ENCODE measurements at regions of chr4 and their contacts with region 1.

Region 1: GRCh38 chr4:42519803-42520417 is 122.6 kb downstream of the SHISA3 start:
- DNase-seq: peak; percentile 81
- ATAC-seq: peak; percentile 64
- H3K4me3 ChIP-seq: no peak overlapping the region
- H3K27ac ChIP-seq: no peak overlapping the region
- H3K4me1 ChIP-seq: no peaks in the 10 kb centered on the region
- H3K27me3 ChIP-seq: no peaks in the 10 kb centered on the region
- CTCF ChIP-seq: peak; percentile 76

Region 2: GRCh38 chr4:41963105-41963504 is 556.8 kb before region 1 on chr4:
- CTCF ChIA-PET with region 1: no interaction called
- POLR2A ChIA-PET with region 1: no interaction called
- intact Hi-C with region 1: loop called (anchors 10 kb)
- DNase-seq: peak; percentile 47
- ATAC-seq: no peak
- H3K4me3 ChIP-seq: no peak overlapping the region
- H3K27ac ChIP-seq: no peak overlapping the region
- H3K4me1 ChIP-seq: peaks cover 15% of the 10 kb centered on the region
- H3K27me3 ChIP-seq: no peaks in the 10 kb centered on the region
- CTCF ChIP-seq: peak; percentile 59

Region 3: DNA sequence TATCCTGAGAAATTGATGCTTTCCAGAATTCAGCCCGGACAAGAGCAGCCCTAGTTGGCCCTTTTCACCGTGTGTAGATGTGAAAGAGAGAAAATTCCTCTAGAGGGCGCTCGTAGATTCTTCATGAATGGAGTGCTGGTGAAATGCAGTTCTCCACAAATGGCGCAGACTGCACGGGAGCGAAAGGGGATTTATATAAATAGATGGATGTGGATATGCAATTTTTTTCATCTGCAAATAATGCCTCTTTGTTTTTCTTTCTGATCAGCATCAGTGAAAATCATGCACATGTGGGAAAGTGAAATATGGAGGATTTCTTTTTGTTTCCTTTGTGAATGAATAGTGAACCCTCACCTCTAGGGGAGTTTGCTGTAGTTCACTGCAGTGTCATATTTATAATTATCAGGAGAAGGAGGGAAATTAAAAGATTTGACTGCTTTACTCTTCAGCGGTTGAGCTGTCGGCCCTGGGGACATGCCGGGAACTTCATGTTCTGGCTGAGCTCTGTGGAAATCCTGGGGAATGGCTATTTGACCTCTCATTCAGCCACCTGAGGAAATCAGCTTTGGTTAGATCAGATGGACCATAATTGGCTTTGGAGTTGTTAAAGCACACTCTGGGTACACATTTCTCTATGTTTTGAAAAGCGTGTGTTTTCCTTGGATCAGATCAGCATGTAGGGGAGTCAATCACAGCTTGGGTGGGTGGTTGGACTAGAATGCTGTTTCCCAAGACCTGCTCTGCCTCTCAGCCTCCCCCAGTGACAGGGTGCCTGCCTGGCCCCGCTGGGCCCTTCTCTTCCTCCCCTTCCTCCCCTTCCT is 237.6 kb before region 1 on chr4:
- CTCF ChIA-PET with region 1: no interaction called
- POLR2A ChIA-PET with region 1: no interaction called
- intact Hi-C with region 1: loop called (anchors 1 kb)
- DNase-seq: peak; percentile 89
- ATAC-seq: peak; percentile 85
- H3K4me3 ChIP-seq: peak overlapping the region; percentile 14; the same call in 1 of the 2 replicates
- H3K27ac ChIP-seq: no peak overlapping the region
- H3K4me1 ChIP-seq: peaks cover 20% of the 10 kb centered on the region
- H3K27me3 ChIP-seq: no peaks in the 10 kb centered on the region
- CTCF ChIP-seq: peak; percentile 84

Region 4: DNA sequence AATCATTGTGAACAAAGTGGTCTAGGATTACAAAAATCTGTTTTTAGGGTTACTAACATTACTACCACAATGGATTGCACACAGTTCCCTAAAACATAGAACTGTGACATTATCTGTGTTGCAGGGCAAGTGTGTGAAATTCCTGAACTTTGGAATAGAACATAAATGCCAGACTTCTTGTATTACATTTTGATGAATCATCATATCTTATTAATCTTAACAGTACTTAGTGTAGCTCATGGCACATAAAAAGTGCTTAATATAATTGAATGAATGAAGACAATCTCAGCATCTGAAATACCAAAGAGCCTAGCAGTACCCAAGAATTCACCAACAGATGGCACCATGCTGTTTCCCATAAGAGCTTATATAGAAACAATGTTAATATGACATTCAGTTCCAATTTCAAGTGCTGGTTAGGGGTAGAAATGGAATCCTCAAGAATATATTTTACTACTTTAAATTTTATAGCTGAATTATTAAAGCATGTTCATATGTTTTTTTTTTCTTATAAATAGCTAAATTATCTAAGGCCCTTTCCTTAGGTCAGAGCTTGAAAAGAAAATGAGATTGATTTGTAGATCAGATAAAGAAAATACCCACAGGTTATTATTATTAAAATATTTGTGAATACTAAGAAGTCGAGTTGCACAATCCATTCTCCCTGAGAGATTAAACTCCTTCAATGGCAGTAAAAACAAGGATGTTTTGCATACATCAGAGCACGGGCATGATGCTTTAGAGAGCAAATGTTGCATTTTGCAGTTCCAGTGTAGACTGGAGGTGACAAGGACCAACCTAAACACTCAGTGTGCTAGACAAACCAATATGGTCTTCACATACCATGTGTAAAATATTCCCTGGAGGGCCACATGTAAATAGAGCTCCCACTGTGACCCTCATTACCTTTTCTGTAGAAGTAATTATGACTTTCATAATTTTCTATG is 148.3 kb before region 1 on chr4:
- CTCF ChIA-PET with region 1: interaction called, 18 read pairs
- POLR2A ChIA-PET with region 1: no interaction called
- intact Hi-C with region 1: loop called (anchors 1 kb)
- DNase-seq: peak; percentile 77
- ATAC-seq: peak; percentile 80
- H3K4me3 ChIP-seq: no peak overlapping the region
- H3K27ac ChIP-seq: no peak overlapping the region
- H3K4me1 ChIP-seq: no peaks in the 10 kb centered on the region
- H3K27me3 ChIP-seq: no peaks in the 10 kb centered on the region
- CTCF ChIP-seq: peak; percentile 68

Region 5: DNA sequence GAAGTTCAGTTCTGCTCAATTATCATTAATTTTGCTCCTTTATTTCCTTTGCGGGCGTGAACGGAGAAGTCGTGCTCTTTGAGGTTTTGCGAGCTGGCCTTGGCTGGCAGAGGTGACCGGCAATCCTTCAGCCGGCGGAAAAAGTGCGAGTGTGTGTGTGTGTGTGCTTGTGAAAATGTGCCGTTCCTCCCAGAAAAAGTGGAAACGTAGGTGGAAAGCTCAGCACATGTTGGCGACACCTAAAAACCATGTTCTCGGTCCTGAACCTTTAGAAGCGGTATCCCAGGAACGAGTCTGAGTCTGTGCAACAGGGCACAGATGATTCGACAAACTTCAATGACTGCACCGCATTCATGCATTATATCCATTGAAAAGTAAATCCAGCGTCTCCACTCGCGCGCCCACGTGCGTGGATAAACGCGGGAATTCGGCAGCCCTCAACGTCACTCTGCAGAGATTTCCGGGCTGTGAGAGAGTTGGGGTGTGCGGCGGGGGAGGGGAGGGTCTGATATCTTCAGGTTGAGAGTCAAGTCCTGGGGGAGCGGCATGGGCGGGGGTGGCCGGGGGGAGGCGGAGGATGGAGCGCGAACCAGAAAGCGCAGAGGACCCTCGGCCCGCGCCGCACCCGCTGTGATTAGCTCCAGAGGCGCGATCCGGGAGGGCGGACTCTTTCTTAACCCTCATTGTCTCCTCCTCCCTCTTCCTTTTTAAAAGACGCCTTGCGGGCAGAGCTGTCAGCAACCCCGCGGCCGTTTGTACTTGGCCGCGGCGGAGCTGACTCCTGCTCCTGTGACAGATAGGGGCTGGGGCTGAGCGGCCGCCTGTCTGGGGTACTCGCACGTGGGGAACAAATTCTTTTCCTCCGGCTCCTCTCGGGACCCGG is 122.9 kb before region 1 on chr4 and contains the start of gene SHISA3:
- CTCF ChIA-PET with region 1: interaction called, 5 read pairs
- POLR2A ChIA-PET with region 1: no interaction called
- intact Hi-C with region 1: loop called (anchors 1 kb)
- DNase-seq: peak; percentile 53
- ATAC-seq: peak; percentile 68
- H3K4me3 ChIP-seq: peak within 1 kb of the TSS; percentile 90
- H3K27ac ChIP-seq: no peak within 1 kb of the TSS
- H3K4me1 ChIP-seq: peaks cover 11% of the 10 kb centered on the region; the same call in 1 of the 2 replicates
- H3K27me3 ChIP-seq: no peaks in the 10 kb centered on the region
- CTCF ChIP-seq: no peak
- total RNA-seq, gene SHISA3: 29.5 and 33.5 TPM in 2 replicates

Region 6: DNA sequence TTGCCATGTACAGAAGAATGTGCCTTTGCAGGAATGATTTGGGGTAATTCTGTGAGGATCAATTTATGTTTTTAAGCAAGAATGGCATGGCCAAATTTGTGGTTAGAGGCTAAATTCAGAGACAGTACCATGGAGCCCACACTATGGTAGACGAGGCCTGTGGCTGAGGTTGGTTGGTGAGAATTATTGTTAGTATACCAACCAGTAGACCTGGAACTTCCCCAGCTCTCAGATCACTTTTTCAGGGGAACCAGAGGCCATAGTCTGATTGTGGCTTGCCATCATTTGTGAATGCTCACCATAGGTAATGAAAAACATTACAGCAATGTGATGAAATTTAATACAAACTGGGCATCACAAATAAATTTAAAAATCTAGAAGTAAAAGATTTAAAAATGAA is 66.3 kb before region 1 on chr4:
- CTCF ChIA-PET with region 1: no interaction called
- POLR2A ChIA-PET with region 1: interaction called, 5 read pairs
- intact Hi-C with region 1: loop called (anchors 10 kb)
- DNase-seq: no peak
- ATAC-seq: no peak
- H3K4me3 ChIP-seq: no peak overlapping the region
- H3K27ac ChIP-seq: no peak overlapping the region
- H3K4me1 ChIP-seq: peaks cover 14% of the 10 kb centered on the region
- H3K27me3 ChIP-seq: no peaks in the 10 kb centered on the region
- CTCF ChIP-seq: no peak